Activated CD4-positive, alpha-beta memory T cell treated with anti-CD3 and anti-CD28 coated beads, Interleukin-2, amount 10 ng/mL, durations not matched to agents 7 days and 5 days (primary cell): ENCODE measurements at regions of chr12 and their contacts with region 1.

Region 1: GRCh38 chr12:48851883-48852733 is at the start of gene DDX23:
- DNase-seq: peak; percentile 95
- H3K4me3 Mint-ChIP-seq: peak within 1 kb of the TSS; percentile 98
- H3K27ac Mint-ChIP-seq: peak within 1 kb of the TSS; percentile 98
- H3K4me1 Mint-ChIP-seq: peaks cover 36% of the 10 kb centered on the region
- H3K27me3 Mint-ChIP-seq: no peaks in the 10 kb centered on the region
- total RNA-seq, gene DDX23: 117 to 127 TPM

Region 2: GRCh38 chr12:48814262-48815125 is 37.6 kb before region 1 on chr12:
- CTCF ChIA-PET with region 1: interaction called, 44 read pairs
- POLR2A ChIA-PET with region 1: interaction called, 26 read pairs
- DNase-seq: peak; percentile 86
- H3K4me3 Mint-ChIP-seq: peak overlapping the region; percentile 98
- H3K27ac Mint-ChIP-seq: peak overlapping the region; percentile 59
- H3K4me1 Mint-ChIP-seq: peaks cover 40% of the 10 kb centered on the region
- H3K27me3 Mint-ChIP-seq: peaks cover 18% of the 10 kb centered on the region

Region 3: GRCh38 chr12:48903982-48904411 is 51.9 kb after region 1 on chr12:
- CTCF ChIA-PET with region 1: interaction called, 53 read pairs
- POLR2A ChIA-PET with region 1: interaction called, 10 read pairs
- DNase-seq: peak; percentile 84
- H3K4me3 Mint-ChIP-seq: peak overlapping the region; percentile 52
- H3K27ac Mint-ChIP-seq: no peak overlapping the region
- H3K4me1 Mint-ChIP-seq: peaks cover 21% of the 10 kb centered on the region
- H3K27me3 Mint-ChIP-seq: peaks cover 8% of the 10 kb centered on the region

Region 4: DNA sequence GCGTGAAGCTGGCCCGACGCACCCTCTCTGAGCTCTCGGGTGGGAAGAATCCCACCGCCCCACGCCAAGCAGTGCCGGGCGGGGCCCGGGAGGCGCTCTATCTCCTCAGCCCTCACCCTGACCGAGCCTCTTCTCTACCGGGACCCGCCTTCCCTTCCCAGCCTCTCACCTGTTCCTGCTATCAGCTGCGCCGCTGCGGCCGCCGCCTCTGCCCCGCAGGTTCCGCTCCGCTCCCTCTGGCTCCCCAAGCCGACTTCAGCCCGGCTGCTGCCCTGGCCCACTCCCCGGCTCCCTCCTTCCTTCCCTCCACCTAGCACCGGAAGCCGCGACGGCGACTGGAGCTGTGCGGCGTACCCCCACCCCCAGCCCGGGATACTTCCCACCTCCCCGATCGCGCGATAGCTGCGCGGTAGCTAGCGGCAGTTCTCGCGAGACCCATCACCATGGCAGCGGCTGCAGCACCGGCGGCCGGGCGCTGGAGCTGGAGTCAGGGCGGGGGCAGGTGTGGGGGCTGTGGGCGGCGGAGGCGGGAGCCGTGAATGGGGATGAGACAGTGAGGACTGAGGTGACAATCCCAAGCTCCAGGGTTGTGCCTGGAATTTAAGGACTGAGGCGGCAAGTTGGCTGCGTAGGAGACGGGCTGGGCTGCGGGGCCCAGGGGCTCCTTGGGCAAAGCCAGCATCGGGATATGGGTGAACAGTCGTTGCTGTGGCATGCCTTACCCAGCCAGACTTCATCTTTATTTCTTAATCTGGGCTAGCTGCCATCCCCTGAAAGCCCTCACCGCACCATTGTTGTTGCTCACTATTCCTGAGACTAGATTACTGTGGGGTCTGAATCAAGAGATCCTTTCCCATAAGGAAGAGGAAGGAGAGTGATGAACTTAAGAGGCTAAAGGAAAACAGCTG is 105.3 kb after region 1 on chr12 and contains the start of gene ARF3:
- CTCF ChIA-PET with region 1: interaction called, 15 read pairs
- POLR2A ChIA-PET with region 1: interaction called, 21 read pairs
- DNase-seq: peak; percentile 94
- H3K4me3 Mint-ChIP-seq: peak within 1 kb of the TSS; percentile 95
- H3K27ac Mint-ChIP-seq: peak within 1 kb of the TSS; percentile 64
- H3K4me1 Mint-ChIP-seq: peaks cover 36% of the 10 kb centered on the region
- H3K27me3 Mint-ChIP-seq: peaks cover 12% of the 10 kb centered on the region
- total RNA-seq, gene ARF3: 114 to 122 TPM

Region 5: GRCh38 chr12:48995061-48995879 is 143.2 kb after region 1 on chr12:
- CTCF ChIA-PET with region 1: interaction called, 30 read pairs
- POLR2A ChIA-PET with region 1: interaction called, 3 read pairs
- DNase-seq: peak; percentile 62
- H3K4me3 Mint-ChIP-seq: no peak overlapping the region
- H3K27ac Mint-ChIP-seq: no peak overlapping the region
- H3K4me1 Mint-ChIP-seq: peaks cover 32% of the 10 kb centered on the region
- H3K27me3 Mint-ChIP-seq: peaks cover 67% of the 10 kb centered on the region

Region 6: GRCh38 chr12:49188914-49189367 is 336.8 kb after region 1 on chr12 and contains the start of gene TUBA1A:
- CTCF ChIA-PET with region 1: no interaction called
- POLR2A ChIA-PET with region 1: interaction called, 12 read pairs
- DNase-seq: peak; percentile 98
- H3K4me3 Mint-ChIP-seq: peak within 1 kb of the TSS; percentile 81
- H3K27ac Mint-ChIP-seq: peak within 1 kb of the TSS; percentile 94
- H3K4me1 Mint-ChIP-seq: peaks cover 30% of the 10 kb centered on the region
- H3K27me3 Mint-ChIP-seq: peaks cover 3% of the 10 kb centered on the region
- total RNA-seq, gene TUBA1A: 106 to 109 TPM

Region 7: DNA sequence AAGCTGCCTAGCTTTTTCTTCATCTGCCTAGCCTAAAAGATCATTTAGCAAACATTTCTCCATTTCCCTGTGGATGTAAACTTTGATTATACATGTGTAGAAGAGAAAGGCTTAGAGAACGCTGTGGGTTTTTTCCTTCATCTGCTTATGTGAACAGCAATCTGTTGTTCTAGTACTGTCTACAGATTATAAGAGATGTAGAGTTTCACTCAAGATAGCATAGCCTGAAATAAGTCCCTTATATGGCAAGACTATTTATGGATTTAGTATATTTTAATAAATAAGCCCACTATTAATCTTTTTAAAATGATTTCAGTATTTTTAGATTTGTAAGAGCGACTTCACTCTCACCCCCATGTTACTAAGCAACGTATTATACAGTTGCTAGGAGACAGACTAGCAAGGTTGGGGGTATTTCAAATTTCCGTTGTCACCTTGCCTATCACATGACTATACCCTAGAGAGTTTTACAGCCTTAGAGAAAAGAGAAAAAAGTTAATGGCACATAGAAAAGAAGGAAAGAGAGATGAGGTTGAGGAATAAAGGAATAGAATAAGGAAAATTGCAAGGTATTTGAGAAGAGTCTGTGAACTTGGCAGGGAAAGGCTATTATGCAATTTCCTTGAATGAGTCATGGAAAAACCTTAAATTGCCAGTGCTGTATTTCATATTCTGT is 348.9 kb after region 1 on chr12:
- CTCF ChIA-PET with region 1: no interaction called
- POLR2A ChIA-PET with region 1: no interaction called
- DNase-seq: no peak
- H3K4me3 Mint-ChIP-seq: no peak overlapping the region
- H3K27ac Mint-ChIP-seq: no peak overlapping the region
- H3K4me1 Mint-ChIP-seq: peaks cover 12% of the 10 kb centered on the region
- H3K27me3 Mint-ChIP-seq: peaks cover 13% of the 10 kb centered on the region